Keratinocyte (primary cell): ENCODE measurements at regions of chr1 and their contacts with region 1.

Region 1: GRCh38 chr1:24199289-24199900 is 12.3 kb upstream of the IFNLR1 start:
- DNase-seq: no peak
- H3K4me3 ChIP-seq: no peak overlapping the region
- H3K27ac ChIP-seq: no peak overlapping the region
- H3K4me1 ChIP-seq: peaks cover 36% of the 10 kb centered on the region
- H3K27me3 ChIP-seq: no peaks in the 10 kb centered on the region
- CTCF ChIP-seq: peak; percentile 73 to 82 (median 81)

Region 2: DNA sequence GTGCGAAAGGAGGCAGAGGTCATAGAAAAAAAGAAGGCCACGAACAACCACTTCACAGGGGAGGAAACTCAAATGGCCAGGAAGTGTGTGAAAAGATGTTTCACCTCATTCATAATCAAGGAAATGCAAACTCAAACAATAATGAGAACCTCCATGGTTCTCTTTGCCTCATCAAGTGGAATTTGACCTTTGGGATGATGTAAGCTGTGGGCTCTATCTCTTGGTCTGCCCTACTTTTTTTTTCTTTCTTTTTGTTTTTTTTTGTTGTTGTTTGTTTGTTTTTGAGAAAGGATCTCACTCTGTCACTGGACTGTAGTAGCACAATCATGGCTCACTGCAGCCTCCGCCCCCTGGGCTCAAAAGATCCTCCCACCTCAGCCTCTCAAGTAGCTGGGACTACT is 63.9 kb after region 1 on chr1:
- dilution Hi-C with region 1: no loop called
- DNase-seq: no peak
- H3K4me3 ChIP-seq: no peak overlapping the region
- H3K27ac ChIP-seq: no peak overlapping the region
- H3K4me1 ChIP-seq: no peaks in the 10 kb centered on the region
- H3K27me3 ChIP-seq: no peaks in the 10 kb centered on the region
- CTCF ChIP-seq: no peak

Region 3: DNA sequence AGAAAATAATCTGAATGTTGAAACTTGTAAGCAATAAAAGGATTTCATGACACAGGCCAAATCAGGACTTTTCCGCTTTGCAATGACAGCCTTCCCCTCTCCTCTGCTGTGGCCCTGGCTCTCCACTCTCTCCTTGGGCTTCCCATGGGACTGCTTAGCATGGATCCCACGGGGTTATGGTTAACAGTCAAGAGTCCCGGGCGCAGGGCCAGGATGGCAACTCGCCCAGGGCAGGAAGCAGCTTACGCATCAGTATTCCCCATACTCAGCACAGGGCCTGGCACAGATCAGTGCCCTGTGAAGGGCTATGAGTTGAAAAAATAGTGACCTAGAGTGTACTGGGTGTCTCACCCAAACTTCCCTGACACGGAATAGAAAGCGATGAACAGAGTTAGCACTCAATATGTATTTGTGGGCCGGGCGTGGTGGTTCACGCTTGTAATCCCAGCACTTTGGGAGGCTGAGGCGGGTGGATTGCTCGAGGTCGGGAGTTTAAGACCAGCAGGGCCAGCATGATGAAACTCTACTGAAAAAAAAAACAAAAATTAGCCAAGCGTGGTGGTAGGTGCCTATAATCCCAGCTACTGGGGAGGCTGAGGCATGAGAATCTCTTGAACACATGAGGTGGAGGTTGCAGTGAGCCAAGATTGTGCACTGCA is 90.7 kb after region 1 on chr1:
- dilution Hi-C with region 1: no loop called
- DNase-seq: no peak
- H3K4me3 ChIP-seq: no peak overlapping the region
- H3K27ac ChIP-seq: peak overlapping the region; percentile 44
- H3K4me1 ChIP-seq: peaks cover 69% of the 10 kb centered on the region
- H3K27me3 ChIP-seq: no peaks in the 10 kb centered on the region
- CTCF ChIP-seq: no peak

Region 4: GRCh38 chr1:24391882-24392603 is 192.6 kb after region 1 on chr1:
- dilution Hi-C with region 1: loop called (anchors 10 kb)
- DNase-seq: no peak
- H3K4me3 ChIP-seq: peak overlapping the region in 1 of 3 experiments; percentile 13
- H3K27ac ChIP-seq: peak overlapping the region; percentile 73
- H3K4me1 ChIP-seq: peaks cover 29% of the 10 kb centered on the region
- H3K27me3 ChIP-seq: no peaks in the 10 kb centered on the region
- CTCF ChIP-seq: peak; percentile 80 to 96 (median 85)